ENCODE measurements at regions of chr22 and their contacts with region 1.

Region 1: GRCh38 chr22:36856121-36856791 is 4.5 kb upstream of the NCF4 start:
- DNase-seq: peak; percentile 87
- H3K4me3 ChIP-seq: no peak overlapping the region
- H3K27ac ChIP-seq: no peak overlapping the region
- H3K4me1 ChIP-seq: peaks cover 7% of the 10 kb centered on the region
- H3K27me3 ChIP-seq: peaks cover 7 to 9% of the 10 kb centered on the region in 2 experiments
- CTCF ChIP-seq: peak; percentile 100
- POLR2A ChIP-seq: no peak

Region 2: DNA sequence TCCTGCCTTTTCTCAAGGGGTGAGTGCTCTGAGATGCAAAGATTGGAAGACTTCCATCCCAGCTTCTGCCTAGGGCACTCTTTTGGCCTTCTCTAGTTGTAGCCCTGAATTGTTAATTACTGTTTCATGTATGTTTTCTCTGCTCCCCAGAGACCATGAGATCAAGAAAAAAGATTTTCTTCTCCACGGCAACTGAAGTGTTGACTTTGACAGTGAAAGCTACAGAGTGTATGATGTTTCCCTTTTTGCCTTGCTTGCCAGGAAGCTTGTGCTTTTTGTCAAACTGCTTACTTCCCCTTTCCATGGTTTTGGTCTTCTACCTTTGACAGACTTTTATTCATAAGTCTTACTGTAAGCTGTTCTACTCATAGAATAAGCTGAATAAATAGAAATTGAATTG is 304.0 kb before region 1 on chr22:
- CTCF ChIA-PET with region 1: interaction called, 116 read pairs
- POLR2A ChIA-PET with region 1: no interaction called
- dilution Hi-C with region 1: no loop called
- intact Hi-C with region 1: no loop called
- DNase-seq: no peak
- H3K4me3 ChIP-seq: no peak overlapping the region
- H3K27ac ChIP-seq: no peak overlapping the region
- H3K4me1 ChIP-seq: no peaks in the 10 kb centered on the region
- H3K27me3 ChIP-seq: peaks cover 4 to 7% of the 10 kb centered on the region in 2 experiments
- CTCF ChIP-seq: no peak
- POLR2A ChIP-seq: no peak

Region 3: DNA sequence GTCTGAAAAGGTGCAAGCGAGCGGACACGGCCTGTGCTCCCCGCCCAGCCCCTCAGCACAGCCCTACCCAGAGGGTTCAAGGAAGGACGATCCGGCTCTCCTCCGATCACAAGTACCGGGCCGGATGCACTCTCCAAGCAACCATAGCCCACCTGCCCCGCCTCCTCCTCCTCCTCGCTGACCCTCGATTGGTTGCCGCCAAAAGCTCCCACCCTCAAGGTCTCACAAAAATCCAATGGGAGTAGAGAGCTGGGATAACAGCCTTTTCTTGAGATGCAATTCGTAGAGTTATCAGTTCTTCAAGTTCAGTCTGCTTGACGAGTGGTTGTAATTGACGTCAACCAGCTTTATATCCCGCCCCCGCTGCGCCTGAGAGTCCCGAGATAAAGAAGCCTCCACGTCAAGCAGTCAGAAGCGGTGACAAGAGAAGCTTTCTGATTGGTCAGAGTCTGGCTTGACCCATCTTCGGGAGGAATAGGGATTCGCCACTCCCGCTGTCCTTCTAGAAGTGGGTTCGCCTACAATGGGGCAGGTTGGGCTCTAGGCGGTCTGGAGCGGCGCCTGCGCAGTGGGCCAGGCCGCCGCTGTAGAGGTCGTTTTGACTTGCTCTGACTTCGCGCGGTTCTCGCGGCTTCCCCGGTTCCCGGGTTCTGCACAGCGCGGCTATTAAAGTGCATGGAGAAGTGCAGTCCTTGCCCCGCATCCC is 80.1 kb before region 1 on chr22 and contains the start of gene IFT27:
- CTCF ChIA-PET with region 1: interaction called, 149 read pairs
- POLR2A ChIA-PET with region 1: no interaction called
- dilution Hi-C with region 1: no loop called
- intact Hi-C with region 1: no loop called
- DNase-seq: peak; percentile 100
- H3K4me3 ChIP-seq: peak within 1 kb of the TSS; percentile 59 to 93 (median 75)
- H3K27ac ChIP-seq: no peak within 1 kb of the TSS
- H3K4me1 ChIP-seq: peaks cover 10% of the 10 kb centered on the region
- H3K27me3 ChIP-seq: no peaks in the 10 kb centered on the region
- CTCF ChIP-seq: no peak
- POLR2A ChIP-seq: peak; percentile 61
- total RNA-seq, gene IFT27: 30.5 and 33.7 TPM in 2 replicates

Region 4: DNA sequence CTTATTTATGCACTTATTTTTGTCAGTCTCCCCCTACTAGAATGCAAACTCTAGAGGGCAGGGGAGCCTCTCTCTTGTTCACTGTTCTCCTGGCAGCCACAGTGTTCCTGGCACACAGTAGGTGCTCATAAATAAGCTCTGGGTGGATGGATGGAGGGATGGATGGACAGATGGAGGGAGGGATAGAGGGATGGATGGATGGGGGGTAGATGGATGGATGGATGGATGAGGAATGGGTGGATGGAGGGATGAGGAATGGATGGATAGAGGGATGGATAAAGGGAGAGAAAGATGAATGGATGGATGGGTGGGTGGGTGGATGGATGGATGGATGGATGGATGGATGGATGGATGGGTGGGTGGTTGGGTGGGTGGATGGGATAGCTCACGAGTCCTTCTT is 52.9 kb before region 1 on chr22:
- CTCF ChIA-PET with region 1: interaction called, 18 read pairs
- POLR2A ChIA-PET with region 1: no interaction called
- dilution Hi-C with region 1: no loop called
- intact Hi-C with region 1: no loop called
- DNase-seq: no peak
- H3K4me3 ChIP-seq: no peak overlapping the region
- H3K27ac ChIP-seq: no peak overlapping the region
- H3K4me1 ChIP-seq: no peaks in the 10 kb centered on the region
- H3K27me3 ChIP-seq: peaks cover 7 to 11% of the 10 kb centered on the region in 2 experiments
- CTCF ChIP-seq: no peak
- POLR2A ChIP-seq: no peak

Region 5: DNA sequence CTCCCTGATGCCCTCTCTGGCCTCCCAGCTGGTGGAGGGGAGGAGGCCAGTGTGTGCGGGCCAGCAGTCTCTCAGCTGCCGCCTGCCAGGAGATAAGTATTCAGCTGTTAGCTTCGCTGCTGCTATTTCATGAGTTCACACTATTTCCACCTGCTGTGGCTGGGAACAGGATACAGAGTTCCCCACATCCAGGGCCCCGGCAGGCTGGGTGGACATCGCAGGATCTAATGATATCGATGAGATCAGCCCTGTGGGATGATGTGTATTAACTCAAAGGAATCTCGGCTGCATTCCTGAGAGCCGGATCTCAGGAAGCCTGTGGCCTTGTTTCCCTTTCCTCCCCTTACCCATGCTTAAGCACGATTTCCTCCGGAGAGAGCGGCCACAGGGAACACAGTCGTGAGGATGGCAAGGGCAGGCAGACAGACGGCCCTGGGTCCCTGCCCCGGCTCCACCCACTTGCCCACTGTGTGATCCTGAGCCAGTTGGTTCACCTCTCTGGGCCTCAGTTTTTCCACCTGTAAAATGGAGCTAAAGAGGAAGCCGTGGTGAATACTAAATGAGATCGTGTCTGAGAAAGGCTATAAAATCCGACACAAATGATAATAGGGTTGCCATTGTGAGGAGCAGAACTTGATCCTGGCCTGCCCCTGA is 32.9 kb before region 1 on chr22:
- CTCF ChIA-PET with region 1: interaction called, 22 read pairs
- POLR2A ChIA-PET with region 1: no interaction called
- dilution Hi-C with region 1: no loop called
- intact Hi-C with region 1: loop called (anchors 1 kb)
- DNase-seq: peak; percentile 71
- H3K4me3 ChIP-seq: no peak overlapping the region
- H3K27ac ChIP-seq: peak overlapping the region; percentile 18
- H3K4me1 ChIP-seq: peaks cover 9% of the 10 kb centered on the region
- H3K27me3 ChIP-seq: peaks cover 7% of the 10 kb centered on the region in 2 experiments
- CTCF ChIP-seq: no peak
- POLR2A ChIP-seq: no peak

Region 6: GRCh38 chr22:36879775-36880174 is 23.5 kb after region 1 on chr22:
- CTCF ChIA-PET with region 1: interaction called, 14 read pairs
- POLR2A ChIA-PET with region 1: no interaction called
- dilution Hi-C with region 1: no loop called
- intact Hi-C with region 1: no loop called
- DNase-seq: peak; percentile 93
- H3K4me3 ChIP-seq: no peak overlapping the region
- H3K27ac ChIP-seq: peak overlapping the region; percentile 96
- H3K4me1 ChIP-seq: peaks cover 37% of the 10 kb centered on the region
- H3K27me3 ChIP-seq: no peaks in the 10 kb centered on the region
- CTCF ChIP-seq: no peak
- POLR2A ChIP-seq: peak; percentile 51

Region 7: GRCh38 chr22:37063431-37064420 is 207.5 kb after region 1 on chr22:
- CTCF ChIA-PET with region 1: no interaction called
- POLR2A ChIA-PET with region 1: no interaction called
- dilution Hi-C with region 1: no loop called
- intact Hi-C with region 1: no loop called
- DNase-seq: no peak
- H3K4me3 ChIP-seq: no peak overlapping the region
- H3K27ac ChIP-seq: no peak overlapping the region
- H3K4me1 ChIP-seq: no peaks in the 10 kb centered on the region
- H3K27me3 ChIP-seq: peaks cover 4 to 6% of the 10 kb centered on the region in 2 experiments
- CTCF ChIP-seq: no peak
- POLR2A ChIP-seq: no peak

Region 8: DNA sequence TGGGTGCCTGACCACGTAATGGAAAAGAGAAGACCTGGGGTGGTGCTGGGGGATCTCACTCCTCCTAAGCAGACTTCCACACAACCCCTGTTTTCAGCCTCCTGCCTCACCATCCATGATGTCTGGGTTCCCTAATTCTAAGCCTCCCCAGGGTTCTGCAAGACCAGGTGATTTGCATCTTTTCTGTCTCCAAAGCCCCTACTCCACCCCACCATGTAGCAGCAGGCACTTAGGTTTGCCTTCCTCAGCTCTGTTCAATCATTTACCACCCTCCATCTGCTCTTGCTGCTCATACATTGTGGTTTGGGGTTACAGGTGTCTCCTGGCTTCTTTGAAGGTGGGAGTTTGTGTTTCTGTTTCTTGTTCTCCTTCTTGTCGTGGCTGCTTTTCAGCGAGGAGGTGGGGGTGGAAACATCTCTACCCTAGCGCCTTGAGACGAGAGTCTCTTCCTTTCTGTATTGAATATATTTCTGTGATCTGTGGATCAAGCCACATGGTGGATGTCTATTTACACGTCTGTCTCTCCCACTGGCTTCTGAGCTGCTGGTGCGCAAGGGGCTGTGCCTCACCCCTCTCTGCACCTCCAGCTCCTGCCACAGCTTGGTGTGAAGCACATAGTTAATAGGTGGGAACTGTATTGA is 362.6 kb after region 1 on chr22:
- CTCF ChIA-PET with region 1: no interaction called
- POLR2A ChIA-PET with region 1: no interaction called
- dilution Hi-C with region 1: no loop called
- intact Hi-C with region 1: no loop called
- DNase-seq: no peak
- H3K4me3 ChIP-seq: no peak overlapping the region
- H3K27ac ChIP-seq: no peak overlapping the region
- H3K4me1 ChIP-seq: no peaks in the 10 kb centered on the region
- H3K27me3 ChIP-seq: peaks cover 0 to 9% of the 10 kb centered on the region in 2 experiments
- CTCF ChIP-seq: no peak
- POLR2A ChIP-seq: no peak